GM10248 (cell line): ENCODE measurements at regions of chr2 and their contacts with region 1.

Region 1: GRCh38 chr2:70124983-70125480 is 37.8 kb downstream of the PCBP1 start:
- DNase-seq: peak; percentile 46
- CTCF ChIP-seq: no peak

Region 2: DNA sequence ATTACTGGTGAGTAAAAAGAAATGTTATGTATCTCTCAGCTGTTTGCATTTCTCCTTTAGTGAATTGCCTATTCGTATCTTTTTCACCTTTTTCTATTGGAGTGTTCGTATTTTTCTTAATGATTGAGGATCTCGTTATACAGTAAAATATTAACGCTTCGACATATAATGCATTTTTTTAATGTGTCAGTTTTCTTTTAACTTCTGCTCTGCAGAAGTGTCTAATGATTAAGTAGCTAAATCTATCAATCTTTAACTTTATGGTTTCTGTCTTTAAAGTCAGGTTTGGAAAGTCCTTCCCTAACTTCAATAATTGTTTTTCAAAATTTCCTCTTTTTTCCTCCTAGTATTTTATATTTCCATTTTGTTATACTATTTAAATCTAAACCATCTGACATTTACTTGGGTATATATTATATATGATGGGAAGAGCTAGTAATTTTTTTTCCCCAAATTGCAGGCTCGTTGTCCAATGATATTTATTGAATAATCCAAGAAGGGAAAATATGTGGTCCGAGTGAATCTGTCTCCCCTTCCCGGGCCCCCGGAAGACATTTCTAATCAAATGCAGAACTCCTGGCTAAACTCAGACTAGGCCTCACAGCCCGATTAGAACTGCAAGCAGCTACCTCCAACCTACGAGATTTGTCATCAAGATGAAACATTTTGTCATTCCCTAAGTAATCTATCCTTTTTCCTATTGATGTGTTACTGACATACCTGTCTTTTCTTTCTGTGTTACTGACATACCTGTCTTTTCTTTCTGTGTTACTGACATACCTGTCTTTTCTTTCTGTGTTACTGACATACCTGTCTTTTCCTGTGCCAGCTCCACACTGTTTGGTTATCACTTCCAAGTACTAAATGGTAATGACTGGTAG is 20.6 kb before region 1 on chr2:
- CTCF ChIA-PET with region 1: interaction called, 13 read pairs
- POLR2A ChIA-PET with region 1: interaction called, 7 read pairs
- DNase-seq: peak; percentile 52
- CTCF ChIP-seq: no peak

Region 3: DNA sequence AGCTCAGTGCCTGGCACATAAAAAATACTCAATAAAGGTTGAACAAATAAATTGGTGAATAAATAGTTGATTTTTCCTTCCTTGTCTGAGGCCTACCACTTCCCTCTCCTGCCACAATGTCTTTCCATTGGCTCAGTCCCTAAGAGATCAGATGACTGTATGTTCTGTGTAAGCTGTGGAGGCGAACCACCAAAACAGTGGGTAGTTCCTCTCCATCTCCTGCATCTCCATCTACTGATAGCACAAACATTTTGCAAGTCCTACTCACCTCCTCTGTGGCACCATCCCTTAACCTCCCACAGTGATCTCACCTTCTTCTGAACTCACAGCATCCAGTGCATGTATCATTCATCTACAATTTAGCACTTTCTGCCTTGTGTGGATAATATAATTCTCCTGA is 12.5 kb after region 1 on chr2:
- CTCF ChIA-PET with region 1: interaction called, 16 read pairs
- POLR2A ChIA-PET with region 1: interaction called, 11 read pairs
- DNase-seq: no peak
- CTCF ChIP-seq: no peak